Activated CD8-positive, alpha-beta T cell treated with anti-CD3 and anti-CD28 coated beads for 36 hours (primary cell): ENCODE measurements at regions of chr1 and their contacts with region 1.

Region 1: GRCh38 chr1:92310185-92310597 is 11.3 kb downstream of the RPAP2 start:
- DNase-seq: no peak
- ATAC-seq: peak; percentile 68
- H3K4me3 Mint-ChIP-seq: no peak overlapping the region
- H3K27ac Mint-ChIP-seq: no peak overlapping the region
- H3K4me1 Mint-ChIP-seq: peaks cover 38% of the 10 kb centered on the region
- H3K27me3 Mint-ChIP-seq: no peaks in the 10 kb centered on the region
- CTCF ChIP-seq: peak; percentile 74

Region 2: DNA sequence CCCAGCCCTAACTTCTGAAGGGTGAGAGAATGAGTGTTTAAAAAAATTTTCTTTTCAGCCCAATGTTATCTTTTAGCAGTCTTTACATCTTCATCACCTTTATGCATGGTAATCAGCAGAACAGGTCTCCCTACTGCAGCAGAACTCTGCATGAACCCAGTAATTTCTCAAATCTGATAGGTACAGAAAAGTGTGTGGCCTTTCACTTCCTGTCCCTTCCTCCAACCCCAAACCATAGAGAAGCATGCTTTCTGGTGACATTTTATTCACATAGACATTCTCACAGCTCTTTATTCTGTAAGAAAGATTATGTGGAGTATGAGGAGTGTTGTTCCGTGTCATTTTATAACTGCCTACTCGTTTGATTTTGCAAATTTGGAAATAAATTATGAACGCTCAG is 57.3 kb after region 1 on chr1:
- CTCF ChIA-PET with region 1: interaction called, 10 read pairs
- POLR2A ChIA-PET with region 1: no interaction called
- intact Hi-C with region 1: loop called (anchors 5 kb)
- DNase-seq: peak; percentile 33
- ATAC-seq: peak; percentile 68
- H3K4me3 Mint-ChIP-seq: no peak overlapping the region
- H3K27ac Mint-ChIP-seq: peak overlapping the region; percentile 65
- H3K4me1 Mint-ChIP-seq: peaks cover 49% of the 10 kb centered on the region
- H3K27me3 Mint-ChIP-seq: no peaks in the 10 kb centered on the region
- CTCF ChIP-seq: no peak

Region 3: DNA sequence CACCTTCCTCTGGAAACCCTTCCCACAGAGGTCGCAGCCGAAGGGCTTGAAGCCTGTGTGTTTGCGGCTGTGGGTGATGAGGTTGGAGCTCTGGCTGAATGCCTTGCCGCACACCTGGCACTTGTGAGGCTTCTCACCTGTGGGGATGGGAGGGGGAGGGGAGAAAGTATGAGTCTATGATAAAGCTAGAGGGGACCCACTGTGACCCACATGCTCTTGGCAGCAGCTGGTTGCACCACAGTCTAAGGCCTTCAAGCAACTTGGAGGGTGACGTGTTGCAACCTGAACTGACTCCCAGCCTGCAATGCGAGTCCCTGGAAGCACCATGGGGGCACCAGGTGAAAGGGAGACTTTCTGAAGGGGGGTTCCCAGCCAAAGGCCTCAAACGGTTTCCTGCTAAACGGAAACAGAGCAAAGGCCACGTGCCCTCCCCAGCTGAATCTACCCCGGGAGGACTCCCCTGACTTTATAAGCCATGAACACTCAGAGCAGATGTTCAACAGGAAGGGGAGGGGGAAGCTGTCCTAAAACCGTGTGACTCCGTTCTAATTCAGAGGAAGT is 166.0 kb after region 1 on chr1:
- CTCF ChIA-PET with region 1: interaction called, 12 read pairs
- POLR2A ChIA-PET with region 1: interaction called, 57 read pairs
- intact Hi-C with region 1: loop called (anchors 5 kb)
- DNase-seq: peak; percentile 93
- ATAC-seq: peak; percentile 82
- H3K4me3 Mint-ChIP-seq: peak overlapping the region; percentile 37
- H3K27ac Mint-ChIP-seq: peak overlapping the region; percentile 82
- H3K4me1 Mint-ChIP-seq: peaks cover 82% of the 10 kb centered on the region
- H3K27me3 Mint-ChIP-seq: no peaks in the 10 kb centered on the region
- CTCF ChIP-seq: no peak

Region 4: DNA sequence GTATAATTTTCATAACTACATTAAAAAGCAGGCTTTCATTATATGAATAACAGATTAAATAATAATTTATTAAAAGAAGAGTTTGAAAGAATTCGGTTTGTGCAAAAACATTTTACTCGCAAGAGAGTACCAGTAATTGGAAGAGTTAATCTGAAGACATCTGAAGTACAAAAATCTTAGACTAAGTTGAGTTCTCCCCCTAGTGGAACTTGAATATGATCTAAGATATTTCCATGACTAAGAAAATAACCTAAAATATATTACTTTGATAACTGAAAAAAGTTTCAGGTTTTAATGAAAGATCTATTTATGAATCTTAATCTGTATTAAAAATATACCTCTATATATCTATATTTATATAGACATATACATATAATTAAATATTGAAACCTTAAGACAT is 289.0 kb after region 1 on chr1:
- CTCF ChIA-PET with region 1: interaction called, 15 read pairs
- POLR2A ChIA-PET with region 1: no interaction called
- intact Hi-C with region 1: no loop called
- DNase-seq: no peak
- ATAC-seq: peak; percentile 61
- H3K4me3 Mint-ChIP-seq: no peak overlapping the region
- H3K27ac Mint-ChIP-seq: no peak overlapping the region
- H3K4me1 Mint-ChIP-seq: peaks cover 40% of the 10 kb centered on the region
- H3K27me3 Mint-ChIP-seq: no peaks in the 10 kb centered on the region
- CTCF ChIP-seq: peak; percentile 74

Region 5: DNA sequence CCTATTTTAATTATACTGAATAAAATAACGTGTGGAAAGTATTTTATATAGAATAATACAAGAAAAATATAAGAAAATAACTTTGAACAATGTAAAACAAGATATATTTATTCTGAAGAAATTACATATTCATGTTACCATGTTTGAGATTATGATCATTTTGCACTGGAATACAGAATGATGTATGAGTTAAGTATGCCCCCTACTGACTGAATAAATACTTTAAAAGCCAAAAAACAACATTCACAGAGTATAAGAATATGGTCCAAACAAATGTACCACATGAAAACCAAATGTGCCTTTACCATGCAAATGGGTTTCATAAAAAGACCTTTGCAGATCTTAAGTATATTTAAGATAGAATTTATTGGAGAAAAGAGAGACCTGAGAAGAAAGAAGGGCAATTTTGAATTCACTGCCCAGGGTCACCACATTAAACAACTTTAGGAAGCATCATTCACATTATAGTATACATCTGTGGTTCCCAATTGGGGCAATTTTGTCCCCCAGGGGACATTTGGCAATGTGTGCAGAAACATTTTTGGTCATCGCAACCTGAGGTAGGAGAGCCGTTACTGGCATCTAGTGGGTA is 313.1 kb after region 1 on chr1:
- CTCF ChIA-PET with region 1: interaction called, 16 read pairs
- POLR2A ChIA-PET with region 1: interaction called, 3 read pairs
- intact Hi-C with region 1: loop called (anchors 5 kb)
- DNase-seq: no peak
- ATAC-seq: no peak
- H3K4me3 Mint-ChIP-seq: no peak overlapping the region
- H3K27ac Mint-ChIP-seq: no peak overlapping the region
- H3K4me1 Mint-ChIP-seq: peaks cover 2% of the 10 kb centered on the region
- H3K27me3 Mint-ChIP-seq: no peaks in the 10 kb centered on the region
- CTCF ChIP-seq: peak; percentile 74